ENCODE measurements at regions of chr1 and their contacts with region 1.

Region 1: DNA sequence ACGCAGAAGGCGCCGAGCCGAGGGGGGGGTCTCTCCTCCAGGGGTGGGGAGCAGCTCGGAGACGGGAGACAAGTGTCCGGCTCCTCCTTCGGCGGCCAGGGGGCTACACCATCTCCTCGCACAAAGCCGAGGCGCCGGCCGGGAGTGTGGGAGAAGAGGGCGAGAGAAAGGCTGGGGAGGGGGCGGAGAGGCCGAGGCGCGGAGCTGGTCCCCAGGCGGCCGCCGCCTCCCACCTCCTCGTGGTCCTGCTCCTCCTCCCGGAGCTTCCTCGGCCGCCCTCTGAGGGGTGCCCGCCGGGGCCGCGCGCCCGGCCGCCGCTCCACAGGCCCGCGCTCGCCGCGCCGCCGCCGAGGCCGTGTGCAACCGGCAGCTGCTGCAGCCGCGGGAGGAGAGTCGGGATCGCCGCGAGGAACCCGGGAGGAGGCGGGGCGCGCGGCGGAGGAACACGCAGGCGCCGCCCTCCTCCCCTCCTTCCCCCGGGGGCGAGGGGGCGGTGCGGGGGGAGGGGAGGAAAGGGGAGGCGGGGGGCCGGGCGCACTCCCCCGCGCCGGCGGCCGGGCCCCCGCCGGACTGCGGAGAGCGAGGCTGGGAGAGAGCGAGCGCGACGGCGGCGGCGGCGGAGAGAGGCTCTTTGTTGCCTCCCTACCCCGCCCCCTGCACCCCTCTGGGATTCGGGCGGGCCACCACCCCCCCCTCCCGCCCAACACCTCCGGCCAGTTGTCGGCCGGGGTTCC is at the start of gene ENAH:
- DNase-seq: peak; percentile 70
- H3K4me3 ChIP-seq: peak within 1 kb of the TSS; percentile 86
- H3K27ac ChIP-seq: no peak within 1 kb of the TSS
- H3K4me1 ChIP-seq: peaks cover 20% of the 10 kb centered on the region
- CTCF ChIP-seq: no peak
- total RNA-seq, gene ENAH: 4.6 and 10.8 TPM in 2 replicates

Region 2: DNA sequence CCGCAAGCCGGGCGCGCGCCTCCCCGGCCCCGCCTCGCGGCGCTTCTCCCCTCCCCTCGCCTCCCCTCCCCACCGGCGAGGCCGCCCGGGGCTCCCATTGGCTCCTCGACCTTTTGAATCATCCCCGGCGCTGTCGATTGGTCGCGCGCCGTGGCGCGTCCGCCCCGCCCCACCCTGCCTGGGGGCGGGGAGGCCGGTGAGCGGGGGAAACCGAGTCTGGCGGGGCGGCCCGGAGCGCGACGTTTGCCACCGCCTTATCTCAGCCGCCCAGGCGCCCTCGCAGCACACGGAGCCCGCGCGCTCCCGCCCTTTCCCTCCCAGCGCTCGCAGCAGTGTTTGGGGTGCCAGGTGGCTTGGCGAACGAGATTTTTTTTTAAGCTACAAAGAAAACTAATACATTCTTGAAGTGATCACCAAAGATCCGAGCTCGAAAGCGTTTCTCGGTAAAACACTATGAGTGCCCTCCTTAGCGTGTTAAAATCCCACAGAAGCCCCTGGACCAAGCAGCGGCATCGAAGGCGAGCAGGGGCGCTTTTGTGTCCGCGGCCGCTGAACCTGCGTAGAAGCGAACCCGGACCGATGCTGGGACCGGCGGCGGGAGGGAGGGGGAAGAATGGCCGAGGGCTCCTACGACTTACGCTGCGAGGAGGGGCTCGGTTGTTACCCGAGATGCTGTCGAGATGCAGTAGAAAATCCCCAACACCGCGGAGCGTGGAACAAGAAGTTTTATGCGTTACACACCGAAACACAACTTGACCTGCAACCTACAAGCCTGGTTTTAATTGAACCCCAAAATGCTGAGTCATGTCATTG is 224.6 kb before region 1 on chr1:
- CTCF ChIA-PET with region 1: interaction called, 3 read pairs
- POLR2A ChIA-PET with region 1: interaction called, 3 read pairs
- intact Hi-C with region 1: loop called (anchors 5 kb)
- DNase-seq: peak; percentile 95
- H3K4me3 ChIP-seq: peak overlapping the region; percentile 85
- H3K27ac ChIP-seq: peak overlapping the region; percentile 92
- H3K4me1 ChIP-seq: peaks cover 33% of the 10 kb centered on the region
- CTCF ChIP-seq: no peak

Region 3: GRCh38 chr1:225480825-225481434 is 172.0 kb before region 1 on chr1:
- CTCF ChIA-PET with region 1: interaction called, 6 read pairs
- POLR2A ChIA-PET with region 1: interaction called, 3 read pairs
- intact Hi-C with region 1: loop called (anchors 1 kb)
- DNase-seq: peak; percentile 92
- H3K4me3 ChIP-seq: peak overlapping the region; percentile 35
- H3K27ac ChIP-seq: peak overlapping the region; percentile 92
- H3K4me1 ChIP-seq: peaks cover 76% of the 10 kb centered on the region
- CTCF ChIP-seq: peak; percentile 97

Region 4: DNA sequence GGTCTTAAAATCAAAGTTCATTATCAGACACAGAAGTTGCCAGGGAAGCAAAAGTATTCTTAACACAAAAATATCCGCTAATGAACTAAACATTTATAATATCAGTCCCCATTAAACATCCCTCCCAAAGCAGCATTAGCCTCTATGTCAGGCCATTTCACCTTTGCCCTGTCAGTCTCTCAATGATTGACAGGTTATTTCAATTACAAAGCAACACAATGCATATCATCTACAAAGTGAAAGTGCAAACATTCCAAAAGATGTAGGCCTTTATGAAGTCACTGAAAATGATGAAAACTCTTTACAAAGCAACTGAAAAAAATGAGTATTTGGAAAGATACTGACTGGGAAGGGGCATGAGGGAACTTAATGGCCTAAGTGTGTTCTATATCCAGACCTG is 14.0 kb before region 1 on chr1:
- CTCF ChIA-PET with region 1: no interaction called
- POLR2A ChIA-PET with region 1: interaction called, 16 read pairs
- intact Hi-C with region 1: no loop called
- DNase-seq: no peak
- H3K4me3 ChIP-seq: no peak overlapping the region
- H3K27ac ChIP-seq: no peak overlapping the region
- H3K4me1 ChIP-seq: no peaks in the 10 kb centered on the region
- CTCF ChIP-seq: no peak

Region 5: DNA sequence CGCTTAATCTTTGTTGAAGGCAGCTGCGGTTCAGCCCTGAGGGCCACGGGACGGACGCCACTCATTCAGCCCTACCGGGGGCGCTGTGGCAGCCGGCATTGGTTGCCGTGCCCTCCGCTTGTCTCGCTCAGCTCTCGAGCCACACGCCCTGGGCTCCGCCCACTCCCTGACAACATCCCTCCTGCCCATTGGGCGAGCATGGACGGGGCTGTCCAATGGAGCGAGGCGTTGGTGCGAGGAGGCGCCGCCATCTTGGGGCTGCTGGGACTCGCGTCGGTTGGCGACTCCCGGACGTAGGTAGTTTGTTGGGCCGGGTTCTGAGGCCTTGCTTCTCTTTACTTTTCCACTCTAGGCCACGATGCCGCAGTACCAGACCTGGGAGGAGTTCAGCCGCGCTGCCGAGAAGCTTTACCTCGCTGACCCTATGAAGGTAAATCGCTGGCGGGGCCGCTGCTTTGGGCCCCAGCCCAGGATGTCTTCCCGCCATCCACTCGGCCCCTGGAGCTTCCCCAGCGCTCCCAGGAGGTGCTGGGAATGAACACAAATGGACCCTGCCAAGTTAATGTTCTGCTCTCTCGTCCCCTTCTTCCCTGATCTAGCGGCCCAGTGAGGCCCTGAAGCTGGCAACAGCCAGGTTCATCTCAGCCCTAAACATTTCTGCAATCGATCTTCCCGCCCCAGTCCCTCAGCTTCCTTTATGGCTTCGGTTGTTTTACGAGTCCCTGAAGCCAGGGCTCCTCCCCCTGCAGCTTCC is 124.9 kb after region 1 on chr1 and contains the start of gene SRP9:
- CTCF ChIA-PET with region 1: no interaction called
- POLR2A ChIA-PET with region 1: interaction called, 4 read pairs
- intact Hi-C with region 1: loop called (anchors 1 kb)
- DNase-seq: peak; percentile 100
- H3K4me3 ChIP-seq: peak within 1 kb of the TSS; percentile 78
- H3K27ac ChIP-seq: peak within 1 kb of the TSS; percentile 91
- H3K4me1 ChIP-seq: peaks cover 56% of the 10 kb centered on the region
- CTCF ChIP-seq: peak; percentile 91
- total RNA-seq, gene SRP9: 182 and 221 TPM in 2 replicates

Region 6: DNA sequence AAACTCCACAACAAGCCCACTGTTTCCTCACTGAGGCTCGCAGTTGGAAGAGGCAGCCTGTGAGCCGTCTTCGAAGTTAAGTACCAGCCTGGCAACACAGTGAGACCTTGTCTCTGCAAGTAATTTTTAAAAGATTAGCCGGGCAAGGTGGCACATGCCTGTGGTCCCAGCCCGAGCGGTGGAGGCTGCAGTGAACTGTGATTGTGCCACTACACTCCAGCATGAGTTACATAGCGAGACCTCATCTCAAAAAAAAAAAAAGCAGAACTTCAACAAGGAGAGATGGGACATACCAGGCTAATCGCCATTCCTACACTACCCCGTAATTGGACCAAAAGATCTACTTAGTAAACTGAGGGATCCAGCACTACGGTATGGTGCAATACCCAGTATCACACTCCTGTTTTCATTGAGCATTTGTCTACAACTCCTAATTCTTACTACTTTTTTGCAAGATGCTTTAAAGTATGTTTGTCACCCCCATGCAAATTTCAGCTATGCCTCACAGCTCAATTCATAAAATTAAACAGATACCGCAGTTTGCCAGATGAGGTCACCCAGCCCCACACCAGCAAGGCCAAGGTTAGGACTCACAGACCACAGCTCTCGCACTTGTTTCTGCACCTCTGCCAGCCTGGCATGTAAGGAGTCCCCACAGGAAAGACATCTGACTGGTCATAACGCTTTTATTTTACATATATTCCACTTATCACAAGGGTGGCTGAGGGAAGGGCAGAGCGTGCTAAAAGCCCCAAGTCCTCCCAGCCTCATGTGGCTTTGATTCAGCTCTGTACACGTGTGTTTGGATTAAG is 325.2 kb after region 1 on chr1:
- CTCF ChIA-PET with region 1: no interaction called
- POLR2A ChIA-PET with region 1: no interaction called
- intact Hi-C with region 1: loop called (anchors 5 kb)
- DNase-seq: peak; percentile 63
- H3K4me3 ChIP-seq: no peak overlapping the region
- H3K27ac ChIP-seq: peak overlapping the region; percentile 24
- H3K4me1 ChIP-seq: peaks cover 19% of the 10 kb centered on the region
- CTCF ChIP-seq: peak; percentile 52; the same call in 1 of the 2 replicates

Measured in OCI-LY7 (cell line).